H1 (cell line): ENCODE measurements at regions of chr21 and their contacts with region 1.

Region 1: GRCh38 chr21:33127154-33127893 is 57.4 kb downstream of the OLIG1 start:
- DNase-seq: peak in 1 of 2 experiments; percentile 90
- H3K4me3 ChIP-seq: peak overlapping the region in 2 of 4 experiments; percentile 17 to 42; a peak in 5 of 8 replicates
- H3K27ac ChIP-seq: no peak overlapping the region
- H3K4me1 ChIP-seq: peaks cover 7 to 17% (median 10%) of the 10 kb centered on the region in 4 experiments; a peak in 6 of 7 replicates
- H3K27me3 ChIP-seq: peaks cover 0 to 6% (median 1%) of the 10 kb centered on the region in 4 experiments; a peak in 3 of 7 replicates
- CTCF ChIP-seq: peak; percentile 83 to 95 (median 93)
- EP300 ChIP-seq: no peak
- POLR2A ChIP-seq: no peak
- RAD21 ChIP-seq: peak; percentile 97 to 99

Region 2: GRCh38 chr21:32940079-32941014 is 187.0 kb before region 1 on chr21:
- CTCF ChIA-PET with region 1: interaction called, 20 read pairs
- POLR2A ChIA-PET with region 1: interaction called, 4 read pairs
- DNase-seq: no peak
- H3K4me3 ChIP-seq: no peak overlapping the region
- H3K27ac ChIP-seq: no peak overlapping the region
- H3K4me1 ChIP-seq: peaks cover 0 to 2% (median 0%) of the 10 kb centered on the region in 4 experiments; a peak in 1 of 7 replicates
- H3K27me3 ChIP-seq: no peaks in the 10 kb centered on the region; a peak in 1 of 7 replicates
- CTCF ChIP-seq: peak; percentile 45 to 84 (median 82)
- EP300 ChIP-seq: no peak
- POLR2A ChIP-seq: no peak
- RAD21 ChIP-seq: peak; percentile 79 to 88

Region 3: DNA sequence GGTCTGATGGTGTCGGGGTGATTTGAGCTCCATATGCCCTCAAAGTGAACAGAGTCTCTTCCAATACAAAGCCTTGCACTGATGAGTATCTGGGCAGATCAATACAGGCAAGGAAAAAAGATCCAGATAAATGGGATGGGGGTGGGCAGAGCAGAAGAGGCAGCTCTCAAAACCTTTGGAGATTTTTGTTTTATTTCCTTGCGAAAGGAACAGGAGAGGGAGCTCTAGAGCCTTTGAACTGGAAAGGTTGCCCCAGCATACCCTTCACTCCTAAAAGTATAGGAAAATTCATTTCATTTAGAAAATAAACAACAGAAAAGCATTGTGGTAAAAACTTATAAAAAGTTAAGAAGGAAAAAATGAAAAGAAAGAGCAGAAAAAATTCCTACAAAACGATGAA is 133.0 kb before region 1 on chr21:
- CTCF ChIA-PET with region 1: interaction called, 21 read pairs
- POLR2A ChIA-PET with region 1: no interaction called
- DNase-seq: no peak
- H3K4me3 ChIP-seq: no peak overlapping the region
- H3K27ac ChIP-seq: no peak overlapping the region
- H3K4me1 ChIP-seq: peaks cover 0 to 3% (median 1%) of the 10 kb centered on the region in 4 experiments; a peak in 2 of 7 replicates
- H3K27me3 ChIP-seq: no peaks in the 10 kb centered on the region; a peak in 1 of 7 replicates
- CTCF ChIP-seq: peak in 2 of 3 experiments; percentile 43 to 54; a peak in 2 of 4 replicates
- EP300 ChIP-seq: no peak
- POLR2A ChIP-seq: no peak
- RAD21 ChIP-seq: peak; percentile 66 to 69

Region 4: GRCh38 chr21:33025489-33026442 is 101.6 kb before region 1 on chr21 and contains the start of gene OLIG2:
- CTCF ChIA-PET with region 1: interaction called, 44 read pairs
- POLR2A ChIA-PET with region 1: interaction called, 3 read pairs
- DNase-seq: peak; percentile 72 to 93
- H3K4me3 ChIP-seq: peak within 1 kb of the TSS; percentile 54 to 70 (median 56)
- H3K27ac ChIP-seq: no peak within 1 kb of the TSS
- H3K4me1 ChIP-seq: peaks cover 6 to 35% (median 24%) of the 10 kb centered on the region in 4 experiments
- H3K27me3 ChIP-seq: peaks cover 90 to 99% (median 98%) of the 10 kb centered on the region in 4 experiments
- CTCF ChIP-seq: no peak
- EP300 ChIP-seq: no peak
- POLR2A ChIP-seq: no peak
- RAD21 ChIP-seq: no peak
- total RNA-seq, gene OLIG2: 0.11 TPM in 1 of 2 replicates, not detected in the other

Region 5: DNA sequence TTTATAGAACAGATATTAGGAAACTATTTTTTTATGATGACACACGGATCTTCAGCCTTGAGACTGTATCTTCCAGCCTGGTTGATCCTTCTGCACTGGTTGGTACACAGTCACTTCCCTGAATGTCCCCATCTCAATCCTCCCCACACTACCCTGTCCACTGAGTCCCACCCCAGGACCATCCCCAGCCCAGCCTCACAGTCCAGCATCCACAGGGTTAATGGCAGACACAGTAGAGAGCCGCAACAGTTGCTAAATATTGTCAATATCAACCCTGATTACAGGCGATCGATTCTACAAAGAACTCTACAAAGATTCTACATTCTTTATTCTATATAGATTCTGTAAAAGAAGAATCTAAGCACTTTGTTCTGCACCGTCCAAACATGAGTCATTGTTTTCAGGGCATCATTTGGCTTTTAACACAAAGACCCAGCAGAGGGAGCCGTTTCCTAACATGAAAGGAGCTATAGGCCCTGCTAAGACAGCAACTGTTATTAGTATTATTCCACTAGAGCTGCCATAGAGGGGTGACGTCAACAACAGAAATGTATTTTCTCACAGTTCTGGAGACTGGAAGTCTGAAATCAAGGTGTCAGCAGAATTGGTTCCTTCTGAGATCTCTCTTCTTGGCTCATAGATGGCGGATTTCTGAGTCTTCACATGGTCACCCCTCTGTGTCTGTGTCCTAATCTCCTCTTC is 72.3 kb after region 1 on chr21:
- CTCF ChIA-PET with region 1: interaction called, 27 read pairs
- POLR2A ChIA-PET with region 1: no interaction called
- DNase-seq: peak in 1 of 2 experiments; percentile 71
- H3K4me3 ChIP-seq: no peak overlapping the region
- H3K27ac ChIP-seq: no peak overlapping the region
- H3K4me1 ChIP-seq: peaks cover 0 to 8% (median 2%) of the 10 kb centered on the region in 4 experiments; a peak in 4 of 7 replicates
- H3K27me3 ChIP-seq: no peaks in the 10 kb centered on the region; a peak in 1 of 7 replicates
- CTCF ChIP-seq: peak in 2 of 3 experiments; percentile 73 to 82; a peak in 3 of 4 replicates
- EP300 ChIP-seq: no peak
- POLR2A ChIP-seq: no peak
- RAD21 ChIP-seq: peak; percentile 95 to 96

Region 6: GRCh38 chr21:33238565-33239255 is 111.4 kb after region 1 on chr21:
- CTCF ChIA-PET with region 1: no interaction called
- POLR2A ChIA-PET with region 1: no interaction called
- DNase-seq: no peak
- H3K4me3 ChIP-seq: 0 out of 8 replicates have a peak overlapping the region, but pooled peaks of 1 of the 4 experiments have one; percentile 7
- H3K27ac ChIP-seq: no peak overlapping the region
- H3K4me1 ChIP-seq: peaks cover 0 to 3% (median 0%) of the 10 kb centered on the region in 4 experiments; a peak in 2 of 7 replicates
- H3K27me3 ChIP-seq: no peaks in the 10 kb centered on the region
- CTCF ChIP-seq: no peak
- EP300 ChIP-seq: no peak
- POLR2A ChIP-seq: no peak
- RAD21 ChIP-seq: no peak